Heart left ventricle (tissue), 16 donors: ENCODE measurements at regions of chr5 and their contacts with region 1.

Region 1: DNA sequence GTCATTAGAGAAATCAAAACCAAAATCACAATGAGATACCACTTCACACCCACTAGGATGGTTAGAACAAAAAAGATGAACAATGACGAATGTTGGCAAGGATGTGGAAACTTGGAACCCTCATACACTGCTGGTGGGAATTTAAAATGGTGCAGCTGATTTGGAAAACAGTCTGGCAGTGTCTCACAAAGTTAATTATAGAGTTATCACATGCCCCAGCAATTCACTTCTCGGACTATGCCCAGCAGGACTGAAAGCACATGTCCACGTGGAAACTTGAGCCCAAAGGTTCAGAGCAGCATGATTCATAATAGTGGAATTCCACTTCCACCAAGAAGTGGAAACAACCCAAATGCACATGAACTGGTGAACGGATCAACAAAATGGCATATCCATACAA is 85.0 kb upstream of the HRH2 start:
- DNase-seq: peak in 4 of 5 donors; percentile 60 to 71 (median 64)
- ATAC-seq: peak; percentile 88 to 96 (median 92)
- H3K4me3 ChIP-seq: no peak overlapping the region
- H3K27ac ChIP-seq: peak overlapping the region; percentile 32 to 92 (median 81)
- H3K4me1 ChIP-seq: peaks cover 0 to 26% (median 5%) of the 10 kb centered on the region in 12 donors
- H3K27me3 ChIP-seq: peaks cover 0 to 6% (median 0%) of the 10 kb centered on the region in 9 donors
- CTCF ChIP-seq: no peak
- POLR2A ChIP-seq: no peak

Region 2: GRCh38 chr5:175534070-175534932 is 38.6 kb before region 1 on chr5:
- intact Hi-C with region 1: loop called in 1 of 10 experiments (anchors 2 kb)
- DNase-seq: peak; percentile 77 to 92 (median 84)
- ATAC-seq: peak; percentile 84 to 98 (median 98)
- H3K4me3 ChIP-seq: peak overlapping the region in 2 of 12 donors; percentile 7 to 32
- H3K27ac ChIP-seq: no peak overlapping the region
- H3K4me1 ChIP-seq: peaks cover 0 to 9% (median 0%) of the 10 kb centered on the region in 12 donors
- H3K27me3 ChIP-seq: no peaks in the 10 kb centered on the region
- CTCF ChIP-seq: peak in 11 of 12 donors; percentile 84 to 99 (median 95)
- POLR2A ChIP-seq: no peak

Region 3: GRCh38 chr5:175597718-175598117 is 24.8 kb after region 1 on chr5:
- intact Hi-C with region 1: loop called in 1 of 10 experiments (anchors 2 kb)
- DNase-seq: peak in 1 of 5 donors; percentile 39
- ATAC-seq: peak; percentile 39 to 58 (median 51)
- H3K4me3 ChIP-seq: no peak overlapping the region
- H3K27ac ChIP-seq: peak overlapping the region in 11 of 12 donors; percentile 61 to 93 (median 81)
- H3K4me1 ChIP-seq: peaks cover 0 to 19% (median 0%) of the 10 kb centered on the region in 12 donors
- H3K27me3 ChIP-seq: peaks cover 0 to 11% (median 0%) of the 10 kb centered on the region in 9 donors
- CTCF ChIP-seq: no peak
- POLR2A ChIP-seq: no peak

Region 4: DNA sequence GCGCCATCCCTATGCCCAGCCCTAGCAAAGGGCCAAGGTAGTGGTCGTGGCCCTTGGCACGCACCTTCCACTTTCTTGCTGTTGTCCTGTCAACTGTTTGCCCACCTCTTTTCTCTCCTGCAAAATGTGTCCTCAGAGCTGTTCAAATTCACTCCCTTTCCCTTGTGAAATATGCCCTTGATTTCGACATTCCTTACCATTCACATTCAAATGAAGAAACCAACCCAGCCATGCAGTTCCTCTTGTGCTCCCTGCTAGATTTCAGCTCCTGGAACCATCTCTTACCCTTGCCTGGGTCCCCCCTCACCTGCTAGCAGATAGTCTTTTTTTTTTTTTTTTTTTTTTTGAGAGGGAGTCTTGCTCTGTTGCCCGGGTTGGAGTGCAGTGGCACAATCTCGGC is 65.4 kb after region 1 on chr5:
- intact Hi-C with region 1: no loop called
- DNase-seq: no peak
- ATAC-seq: peak in 1 of 4 donors; percentile 38
- H3K4me3 ChIP-seq: no peak overlapping the region
- H3K27ac ChIP-seq: no peak overlapping the region
- H3K4me1 ChIP-seq: peaks cover 0 to 16% (median 0%) of the 10 kb centered on the region in 12 donors
- H3K27me3 ChIP-seq: no peaks in the 10 kb centered on the region
- CTCF ChIP-seq: no peak
- POLR2A ChIP-seq: no peak

Region 5: DNA sequence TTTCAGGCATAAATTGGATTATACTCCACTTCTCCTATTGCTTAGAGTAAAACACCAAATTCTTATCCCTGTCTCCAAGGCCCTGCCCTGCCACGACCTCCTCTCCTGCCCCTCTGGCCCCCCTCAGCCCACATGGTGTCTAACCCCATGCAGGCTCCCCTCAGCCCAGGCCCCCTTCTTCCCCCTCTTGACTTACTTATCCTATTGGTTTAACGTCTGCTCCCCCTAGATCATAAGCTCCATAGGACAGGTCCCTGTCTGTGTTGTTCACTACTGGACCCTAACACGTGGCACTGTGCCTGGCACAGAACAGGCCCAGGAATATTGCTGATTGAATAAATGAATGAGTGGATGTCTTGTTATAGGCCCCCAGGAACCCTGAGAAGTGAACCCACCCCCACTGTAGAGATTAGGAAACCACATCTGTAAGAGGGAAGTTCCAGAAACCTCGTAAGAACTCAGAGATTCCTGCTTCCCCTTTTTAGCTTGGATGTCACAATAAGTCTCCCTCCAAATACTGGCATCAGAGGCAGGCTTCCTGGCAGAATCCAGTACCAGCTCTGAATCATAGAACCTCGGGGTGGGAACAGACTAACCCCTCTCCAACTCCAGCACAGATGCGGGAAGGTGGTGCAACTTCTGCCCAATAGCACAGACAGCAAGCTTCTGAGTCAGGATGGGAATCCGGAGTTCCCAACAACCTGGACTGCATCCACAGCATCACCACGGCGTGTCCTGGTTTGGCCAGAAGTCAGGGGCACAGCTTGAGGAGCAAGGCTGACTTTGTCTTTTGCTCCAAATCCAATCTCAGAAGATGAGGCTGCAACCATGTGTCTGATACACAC is 116.5 kb after region 1 on chr5:
- intact Hi-C with region 1: loop called in 3 of 10 experiments (anchors 2 to 10 kb)
- DNase-seq: peak in 2 of 5 donors; percentile 63 to 91
- ATAC-seq: peak in 3 of 4 donors; percentile 5 to 58 (median 51)
- H3K4me3 ChIP-seq: no peak overlapping the region
- H3K27ac ChIP-seq: peak overlapping the region in 11 of 12 donors; percentile 42 to 88 (median 77)
- H3K4me1 ChIP-seq: peaks cover 0 to 75% (median 47%) of the 10 kb centered on the region in 12 donors
- H3K27me3 ChIP-seq: no peaks in the 10 kb centered on the region
- CTCF ChIP-seq: no peak
- POLR2A ChIP-seq: peak in 1 of 2 donors; percentile 23